Activated CD4-positive, alpha-beta T cell treated with anti-CD3 and anti-CD28 coated beads for 36 hours (primary cell): ENCODE measurements at regions of chr13 and their contacts with region 1.

Region 1: DNA sequence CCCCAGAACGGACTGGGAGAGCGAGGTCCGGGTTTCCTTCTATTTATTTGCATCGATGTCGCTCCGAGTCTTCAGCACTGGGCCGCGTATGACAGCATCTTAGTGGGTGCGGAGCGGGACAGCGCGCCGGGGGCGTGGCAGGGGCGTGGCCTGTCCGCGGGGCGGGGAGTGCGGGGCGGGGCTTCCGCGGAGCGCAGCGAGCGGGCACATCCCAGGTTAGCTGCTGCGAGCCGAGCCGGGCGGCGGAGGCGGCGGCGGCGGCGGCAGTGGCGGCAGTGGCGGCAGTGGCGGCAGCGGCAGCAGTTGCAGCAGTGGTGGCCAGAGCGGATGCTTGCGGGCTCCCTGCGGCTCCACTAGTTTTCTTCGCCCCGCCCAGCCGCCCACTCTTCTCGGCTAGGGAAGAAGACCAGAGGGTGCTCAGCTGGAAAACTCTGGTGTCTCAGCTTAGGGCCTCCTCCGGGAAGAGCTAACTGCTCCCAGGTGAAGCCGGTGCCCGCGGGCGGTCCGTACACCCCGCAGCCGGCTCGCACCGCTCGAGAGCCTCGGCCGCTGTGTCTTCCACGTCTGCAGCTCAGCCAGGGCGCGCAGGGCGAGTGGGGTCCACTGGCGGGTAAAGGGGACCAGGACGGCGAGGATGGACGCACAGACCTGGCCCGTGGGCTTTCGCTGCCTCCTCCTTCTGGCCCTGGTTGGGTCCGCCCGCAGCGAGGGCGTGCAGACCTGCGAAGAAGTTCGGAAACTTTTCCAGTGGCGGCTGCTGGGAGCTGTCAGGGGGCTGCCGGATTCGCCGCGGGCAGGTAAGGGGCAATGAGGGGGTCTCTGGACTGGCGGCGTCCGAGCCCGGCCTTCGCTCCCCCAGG is at the start of gene GPC5:
- DNase-seq: peak; percentile 92
- ATAC-seq: peak; percentile 98
- H3K4me3 Mint-ChIP-seq: peak within 1 kb of the TSS; percentile 69
- H3K27ac Mint-ChIP-seq: peak within 1 kb of the TSS; percentile 47
- H3K4me1 Mint-ChIP-seq: peaks cover 15% of the 10 kb centered on the region
- H3K27me3 Mint-ChIP-seq: peaks cover 48% of the 10 kb centered on the region
- total RNA-seq, gene GPC5: 0.63 to 0.66 TPM

Region 2: GRCh38 chr13:90594694-90595093 is 803.9 kb before region 1 on chr13:
- CTCF ChIA-PET with region 1: no interaction called
- POLR2A ChIA-PET with region 1: no interaction called
- intact Hi-C with region 1: no loop called
- DNase-seq: no peak
- ATAC-seq: no peak
- H3K4me3 Mint-ChIP-seq: no peak overlapping the region
- H3K27ac Mint-ChIP-seq: no peak overlapping the region
- H3K4me1 Mint-ChIP-seq: no peaks in the 10 kb centered on the region
- H3K27me3 Mint-ChIP-seq: no peaks in the 10 kb centered on the region

Region 3: GRCh38 chr13:91369441-91369831 is 29.2 kb before region 1 on chr13:
- CTCF ChIA-PET with region 1: no interaction called
- POLR2A ChIA-PET with region 1: no interaction called
- intact Hi-C with region 1: loop called (anchors 1 to 2 kb)
- DNase-seq: peak; percentile 76
- ATAC-seq: peak; percentile 81
- H3K4me3 Mint-ChIP-seq: no peak overlapping the region
- H3K27ac Mint-ChIP-seq: peak overlapping the region; percentile 93
- H3K4me1 Mint-ChIP-seq: peaks cover 43% of the 10 kb centered on the region
- H3K27me3 Mint-ChIP-seq: peaks cover 6% of the 10 kb centered on the region

Region 4: GRCh38 chr13:91384896-91385295 is 13.7 kb before region 1 on chr13:
- CTCF ChIA-PET with region 1: interaction called, 3 read pairs
- POLR2A ChIA-PET with region 1: no interaction called
- intact Hi-C with region 1: loop called in 1 of 2 experiments (anchors 1 kb)
- DNase-seq: no peak
- ATAC-seq: no peak
- H3K4me3 Mint-ChIP-seq: no peak overlapping the region
- H3K27ac Mint-ChIP-seq: no peak overlapping the region
- H3K4me1 Mint-ChIP-seq: peaks cover 6% of the 10 kb centered on the region
- H3K27me3 Mint-ChIP-seq: peaks cover 16% of the 10 kb centered on the region

Region 5: GRCh38 chr13:91557328-91558090 is 158.9 kb after region 1 on chr13:
- CTCF ChIA-PET with region 1: no interaction called
- POLR2A ChIA-PET with region 1: no interaction called
- intact Hi-C with region 1: no loop called
- DNase-seq: no peak
- ATAC-seq: no peak
- H3K4me3 Mint-ChIP-seq: no peak overlapping the region
- H3K27ac Mint-ChIP-seq: no peak overlapping the region
- H3K4me1 Mint-ChIP-seq: no peaks in the 10 kb centered on the region
- H3K27me3 Mint-ChIP-seq: peaks cover 2% of the 10 kb centered on the region